Activated CD8-positive, alpha-beta T cell treated with anti-CD3 and anti-CD28 coated beads, Interleukin-2, amount 10 ng/mL, durations not matched to agents 7 days and 5 days (primary cell): ENCODE measurements at regions of chr6 and their contacts with region 1.

Region 1: GRCh38 chr6:37516076-37516919 is 16.6 kb upstream of the CCDC167 start:
- DNase-seq: peak; percentile 94
- ATAC-seq: peak; percentile 89
- H3K4me3 Mint-ChIP-seq: peak overlapping the region; percentile 83
- H3K27ac Mint-ChIP-seq: peak overlapping the region; percentile 98
- H3K4me1 Mint-ChIP-seq: peaks cover 74% of the 10 kb centered on the region
- H3K27me3 Mint-ChIP-seq: no peaks in the 10 kb centered on the region

Region 2: DNA sequence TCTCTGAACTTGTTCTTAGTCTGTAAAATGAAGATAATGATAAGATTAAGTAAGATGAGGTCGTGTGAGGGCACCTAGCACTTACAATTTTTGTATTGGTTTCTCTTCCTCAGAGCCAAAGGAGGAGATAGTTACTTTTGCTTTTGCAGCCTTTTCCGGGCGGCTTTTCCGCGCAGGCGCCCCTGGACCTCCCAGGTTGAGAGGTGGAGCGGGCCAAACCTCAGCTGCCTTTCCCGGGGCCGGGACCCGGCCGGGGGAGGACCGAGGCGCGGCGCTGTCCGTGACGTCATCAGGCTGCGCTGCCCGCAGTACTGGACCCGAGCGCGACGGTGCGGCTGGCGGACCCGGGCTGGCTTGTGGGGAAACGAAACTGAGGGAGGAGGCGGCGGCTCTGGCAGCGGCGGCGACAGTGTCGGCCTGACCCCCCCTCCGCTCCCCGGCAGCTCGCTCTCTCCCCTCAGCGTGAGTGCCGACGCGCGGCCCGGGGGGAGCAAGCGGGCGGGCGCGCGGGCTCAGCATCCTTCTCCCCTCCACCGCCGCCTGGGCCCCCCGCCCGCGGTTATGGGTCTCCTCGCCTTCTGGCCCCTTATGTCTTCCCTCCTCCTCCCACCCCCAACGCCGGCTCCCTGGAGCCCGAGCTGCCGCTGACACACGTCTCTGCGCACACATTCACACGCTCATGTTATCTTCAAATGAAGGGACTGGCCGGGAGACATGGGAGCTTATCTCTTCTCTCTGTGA is 83.2 kb before region 1 on chr6 and contains the start of gene CMTR1:
- CTCF ChIA-PET with region 1: interaction called, 5 read pairs
- POLR2A ChIA-PET with region 1: interaction called, 22 read pairs
- DNase-seq: peak; percentile 97
- ATAC-seq: peak; percentile 95
- H3K4me3 Mint-ChIP-seq: peak within 1 kb of the TSS; percentile 92
- H3K27ac Mint-ChIP-seq: peak within 1 kb of the TSS; percentile 98
- H3K4me1 Mint-ChIP-seq: peaks cover 47% of the 10 kb centered on the region
- H3K27me3 Mint-ChIP-seq: peaks cover 10% of the 10 kb centered on the region
- total RNA-seq, gene CMTR1: 71.7 to 74.2 TPM

Region 3: DNA sequence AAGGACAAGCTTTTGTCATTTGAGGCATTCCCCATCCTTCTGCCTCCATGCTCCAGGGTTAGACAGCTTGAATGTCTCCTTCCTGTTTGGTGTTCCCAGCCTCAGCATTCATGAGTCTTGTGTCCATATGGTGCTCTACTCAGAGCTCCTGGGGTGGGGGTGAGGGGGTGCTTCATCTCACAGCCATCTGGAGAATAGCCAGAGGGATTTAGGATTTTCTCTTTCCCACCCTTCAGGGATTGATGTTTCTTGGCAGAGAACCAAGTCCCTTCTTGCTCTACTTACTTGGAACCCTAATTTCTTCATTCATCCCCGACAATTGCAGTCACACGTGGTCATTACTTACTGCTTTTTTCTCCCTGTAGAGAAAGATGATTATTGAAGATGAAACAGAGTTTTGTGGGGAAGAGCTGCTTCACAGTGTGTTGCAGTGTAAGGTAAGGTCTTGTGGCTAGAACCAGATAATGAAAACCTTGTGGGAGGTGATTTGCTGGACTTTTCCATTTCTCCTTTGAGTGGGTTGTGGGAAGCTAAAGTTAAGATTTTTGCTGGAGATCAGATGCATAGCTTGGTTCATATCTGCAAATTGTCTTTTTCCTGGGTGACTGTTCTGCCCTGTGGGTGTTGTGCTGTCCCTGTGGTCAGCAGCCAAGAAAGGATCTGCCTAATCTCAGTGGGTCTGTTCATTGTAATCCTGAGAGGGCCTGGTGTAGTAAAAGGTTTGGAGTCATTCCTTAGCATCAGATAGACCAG is 64.7 kb before region 1 on chr6:
- CTCF ChIA-PET with region 1: no interaction called
- POLR2A ChIA-PET with region 1: no interaction called
- DNase-seq: no peak
- ATAC-seq: no peak
- H3K4me3 Mint-ChIP-seq: no peak overlapping the region
- H3K27ac Mint-ChIP-seq: peak overlapping the region; percentile 50
- H3K4me1 Mint-ChIP-seq: peaks cover 3% of the 10 kb centered on the region
- H3K27me3 Mint-ChIP-seq: no peaks in the 10 kb centered on the region

Region 4: GRCh38 chr6:37491171-37491829 is 25.0 kb before region 1 on chr6:
- CTCF ChIA-PET with region 1: interaction called, 12 read pairs
- POLR2A ChIA-PET with region 1: interaction called, 12 read pairs
- DNase-seq: no peak
- ATAC-seq: no peak
- H3K4me3 Mint-ChIP-seq: no peak overlapping the region
- H3K27ac Mint-ChIP-seq: no peak overlapping the region
- H3K4me1 Mint-ChIP-seq: peaks cover 45% of the 10 kb centered on the region
- H3K27me3 Mint-ChIP-seq: no peaks in the 10 kb centered on the region

Region 5: GRCh38 chr6:37499433-37500293 is 16.6 kb before region 1 on chr6 and contains the start of gene CCDC167:
- CTCF ChIA-PET with region 1: interaction called, 64 read pairs
- POLR2A ChIA-PET with region 1: interaction called, 129 read pairs
- DNase-seq: peak; percentile 99
- ATAC-seq: peak; percentile 87
- H3K4me3 Mint-ChIP-seq: peak within 1 kb of the TSS; percentile 97
- H3K27ac Mint-ChIP-seq: peak within 1 kb of the TSS; percentile 98
- H3K4me1 Mint-ChIP-seq: peaks cover 77% of the 10 kb centered on the region
- H3K27me3 Mint-ChIP-seq: no peaks in the 10 kb centered on the region
- total RNA-seq, gene CCDC167: 64.0 to 69.4 TPM

Region 6: DNA sequence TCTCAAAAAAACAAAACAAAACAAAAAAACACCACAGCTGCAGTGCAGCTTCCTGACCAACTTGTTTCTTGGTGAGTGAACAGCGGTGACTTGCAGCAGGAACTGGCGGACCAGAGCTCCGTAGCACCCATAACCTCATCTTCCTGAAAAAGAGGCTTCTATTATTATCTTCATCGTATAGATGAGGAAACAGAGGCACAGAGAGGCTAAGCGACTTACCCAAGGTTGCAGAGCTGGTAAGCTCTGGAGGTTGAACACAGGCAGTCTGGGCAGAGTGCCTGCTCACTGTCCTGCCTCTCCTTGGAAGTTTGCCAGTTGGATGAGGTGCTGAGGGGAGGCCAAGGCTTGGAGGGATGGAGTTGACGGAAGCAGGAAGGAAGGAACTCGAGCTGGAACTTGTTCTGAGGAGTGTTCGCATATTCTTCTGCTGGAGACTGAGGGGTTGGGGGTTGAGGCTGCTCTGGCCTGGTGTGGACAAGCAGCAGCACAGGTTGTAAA is 31.3 kb after region 1 on chr6:
- CTCF ChIA-PET with region 1: no interaction called
- POLR2A ChIA-PET with region 1: interaction called, 13 read pairs
- DNase-seq: peak; percentile 46
- ATAC-seq: peak; percentile 64
- H3K4me3 Mint-ChIP-seq: peak overlapping the region; percentile 23
- H3K27ac Mint-ChIP-seq: peak overlapping the region; percentile 77
- H3K4me1 Mint-ChIP-seq: peaks cover 20% of the 10 kb centered on the region
- H3K27me3 Mint-ChIP-seq: peaks cover 2% of the 10 kb centered on the region